ENCODE measurements at regions of chr12 and their contacts with region 1.

Region 1: GRCh38 chr12:6285063-6285477 is 25.4 kb upstream of the PLEKHG6 start:
- DNase-seq: peak; percentile 76
- ATAC-seq: peak; percentile 56
- H3K4me3 ChIP-seq: no peak overlapping the region
- H3K27ac ChIP-seq: no peak overlapping the region
- H3K4me1 ChIP-seq: peaks cover 18% of the 10 kb centered on the region
- H3K27me3 ChIP-seq: no peaks in the 10 kb centered on the region
- CTCF ChIP-seq: peak; percentile 96
- POLR2A ChIP-seq: peak; percentile 44; the same call in 1 of the 2 replicates
- RAD21 ChIP-seq: peak; percentile 99

Region 2: GRCh38 chr12:5499566-5500330 is 785.3 kb before region 1 on chr12:
- CTCF ChIA-PET with region 1: no interaction called
- POLR2A ChIA-PET with region 1: no interaction called
- dilution Hi-C with region 1: no loop called
- in situ Hi-C with region 1: no loop called
- intact Hi-C with region 1: loop called (anchors 10 kb)
- DNase-seq: peak; percentile 97
- ATAC-seq: peak; percentile 92
- H3K4me3 ChIP-seq: no peak overlapping the region
- H3K27ac ChIP-seq: peak overlapping the region; percentile 95
- H3K4me1 ChIP-seq: peaks cover 39% of the 10 kb centered on the region
- H3K27me3 ChIP-seq: no peaks in the 10 kb centered on the region
- CTCF ChIP-seq: no peak
- POLR2A ChIP-seq: no peak
- RAD21 ChIP-seq: no peak

Region 3: GRCh38 chr12:5988659-5989116 is 296.4 kb before region 1 on chr12:
- CTCF ChIA-PET with region 1: interaction called, 15 read pairs
- POLR2A ChIA-PET with region 1: interaction called, 3 read pairs
- dilution Hi-C with region 1: no loop called
- in situ Hi-C with region 1: loop called (anchors 5 kb)
- intact Hi-C with region 1: loop called (anchors 1 kb)
- DNase-seq: peak; percentile 71
- ATAC-seq: peak; percentile 100
- H3K4me3 ChIP-seq: no peak overlapping the region
- H3K27ac ChIP-seq: no peak overlapping the region
- H3K4me1 ChIP-seq: no peaks in the 10 kb centered on the region
- H3K27me3 ChIP-seq: peaks cover 13% of the 10 kb centered on the region
- CTCF ChIP-seq: peak; percentile 98
- POLR2A ChIP-seq: no peak; the same call in 1 of the 2 replicates
- RAD21 ChIP-seq: peak; percentile 99

Region 4: DNA sequence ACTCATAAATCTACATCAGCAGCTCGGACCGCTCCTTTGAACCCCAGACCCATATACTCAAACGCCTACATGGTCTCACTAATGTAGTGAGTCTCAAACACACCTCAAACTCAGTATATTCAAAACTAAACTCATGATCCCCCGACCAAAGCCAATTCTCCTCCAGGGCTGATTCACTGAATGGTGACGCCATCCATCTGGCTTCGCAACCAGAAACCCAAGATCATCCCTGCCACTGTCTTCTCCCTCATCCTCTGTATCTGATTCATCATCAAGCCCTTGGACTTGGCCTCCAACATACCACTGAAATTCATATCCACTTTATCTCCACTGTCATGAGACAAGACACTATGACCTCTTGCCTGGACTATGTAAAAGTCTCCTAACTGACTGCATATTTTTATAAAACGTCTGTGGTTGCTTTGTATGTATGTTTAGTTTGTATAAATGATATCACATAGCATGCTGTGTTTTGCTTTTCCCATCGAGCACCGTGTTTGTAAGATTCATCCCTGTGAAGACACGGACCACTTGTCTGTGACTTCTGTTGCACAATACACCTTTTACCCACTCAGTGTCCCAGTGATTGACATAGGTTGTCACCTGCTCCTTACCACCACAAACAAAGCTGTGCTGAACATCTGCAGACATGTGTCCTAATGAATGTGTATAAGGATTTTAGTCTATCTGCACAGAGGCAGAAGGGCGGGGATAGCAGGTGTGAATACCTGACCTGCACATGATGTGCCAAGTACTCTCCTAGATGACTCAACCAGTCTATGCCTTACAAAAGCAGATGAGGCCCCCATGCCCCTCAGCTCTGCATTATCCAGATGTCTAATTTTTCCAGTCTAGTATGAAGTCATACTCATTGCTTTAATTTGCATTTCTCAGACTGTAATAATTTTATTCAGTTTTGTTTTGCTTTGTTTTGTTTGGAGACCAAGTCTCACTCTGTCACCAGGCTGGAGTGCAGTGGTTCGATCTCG is 237.5 kb before region 1 on chr12:
- CTCF ChIA-PET with region 1: no interaction called
- POLR2A ChIA-PET with region 1: no interaction called
- dilution Hi-C with region 1: no loop called
- in situ Hi-C with region 1: no loop called
- intact Hi-C with region 1: loop called (anchors 1 kb)
- DNase-seq: peak; percentile 99
- ATAC-seq: peak; percentile 92
- H3K4me3 ChIP-seq: no peak overlapping the region
- H3K27ac ChIP-seq: peak overlapping the region; percentile 86
- H3K4me1 ChIP-seq: peaks cover 24% of the 10 kb centered on the region
- H3K27me3 ChIP-seq: no peaks in the 10 kb centered on the region
- CTCF ChIP-seq: no peak
- POLR2A ChIP-seq: no peak
- RAD21 ChIP-seq: no peak

Region 5: GRCh38 chr12:7591531-7591930 is 1306.5 kb after region 1 on chr12:
- CTCF ChIA-PET with region 1: no interaction called
- POLR2A ChIA-PET with region 1: no interaction called
- dilution Hi-C with region 1: no loop called
- in situ Hi-C with region 1: no loop called
- intact Hi-C with region 1: no loop called
- DNase-seq: no peak
- ATAC-seq: no peak
- H3K4me3 ChIP-seq: no peak overlapping the region
- H3K27ac ChIP-seq: no peak overlapping the region
- H3K4me1 ChIP-seq: no peaks in the 10 kb centered on the region
- H3K27me3 ChIP-seq: no peaks in the 10 kb centered on the region
- CTCF ChIP-seq: no peak
- POLR2A ChIP-seq: no peak
- RAD21 ChIP-seq: no peak

Measured in IMR-90 (cell line).